Ovary (tissue), 10 donors: ENCODE measurements at regions of chr17 and their contacts with region 1.

Region 1: GRCh38 chr17:40349920-40350909 is 14.3 kb downstream of the GJD3 start:
- DNase-seq: peak in 3 of 5 donors; percentile 30 to 49 (median 40)
- H3K4me3 ChIP-seq: no peak overlapping the region
- H3K27ac ChIP-seq: peak overlapping the region in 1 of 2 donors; percentile 84
- H3K4me1 ChIP-seq: peaks cover 38% of the 10 kb centered on the region
- H3K27me3 ChIP-seq: no peaks in the 10 kb centered on the region
- CTCF ChIP-seq: no peak
- EP300 ChIP-seq: no peak
- POLR2A ChIP-seq: no peak

Region 2: GRCh38 chr17:40203131-40203530 is 147.1 kb before region 1 on chr17:
- intact Hi-C with region 1: loop called (anchors 5 to 10 kb)
- DNase-seq: no peak
- H3K4me3 ChIP-seq: no peak overlapping the region
- H3K27ac ChIP-seq: no peak overlapping the region
- H3K4me1 ChIP-seq: no peaks in the 10 kb centered on the region
- H3K27me3 ChIP-seq: no peaks in the 10 kb centered on the region
- CTCF ChIP-seq: no peak
- EP300 ChIP-seq: no peak
- POLR2A ChIP-seq: no peak

Region 3: GRCh38 chr17:40287494-40288369 is 62.5 kb before region 1 on chr17 and contains the start of gene CDC6:
- intact Hi-C with region 1: no loop called
- DNase-seq: peak; percentile 97 to 99 (median 98)
- H3K4me3 ChIP-seq: peak within 1 kb of the TSS; percentile 41
- H3K27ac ChIP-seq: no peak within 1 kb of the TSS
- H3K4me1 ChIP-seq: peaks cover 2% of the 10 kb centered on the region
- H3K27me3 ChIP-seq: no peaks in the 10 kb centered on the region
- CTCF ChIP-seq: no peak
- EP300 ChIP-seq: no peak
- POLR2A ChIP-seq: no peak
- total RNA-seq, gene CDC6: 0.34 to 3.8 (median 0.76) TPM

Region 4: GRCh38 chr17:40303009-40303657 is 47.1 kb before region 1 on chr17:
- intact Hi-C with region 1: loop called (anchors 2 kb)
- DNase-seq: peak in 2 of 5 donors; percentile 32 to 68
- H3K4me3 ChIP-seq: no peak overlapping the region
- H3K27ac ChIP-seq: no peak overlapping the region
- H3K4me1 ChIP-seq: peaks cover 21% of the 10 kb centered on the region
- H3K27me3 ChIP-seq: no peaks in the 10 kb centered on the region
- CTCF ChIP-seq: peak; percentile 61 to 82 (median 78)
- EP300 ChIP-seq: no peak
- POLR2A ChIP-seq: no peak

Region 5: GRCh38 chr17:40309031-40309948 is 40.9 kb before region 1 on chr17 and contains the start of gene RARA:
- intact Hi-C with region 1: loop called in 2 of 4 experiments (anchors 2 kb)
- DNase-seq: peak; percentile 44 to 68 (median 61)
- H3K4me3 ChIP-seq: peak within 1 kb of the TSS; percentile 52
- H3K27ac ChIP-seq: peak within 1 kb of the TSS in 1 of 2 donors; percentile 58
- H3K4me1 ChIP-seq: peaks cover 33% of the 10 kb centered on the region
- H3K27me3 ChIP-seq: no peaks in the 10 kb centered on the region
- CTCF ChIP-seq: no peak
- EP300 ChIP-seq: no peak
- POLR2A ChIP-seq: no peak
- total RNA-seq, gene RARA: 19.8 to 100 (median 62.2) TPM

Region 6: GRCh38 chr17:40317880-40318829 is 32.1 kb before region 1 on chr17:
- intact Hi-C with region 1: loop called in 1 of 4 experiments (anchors 5 kb)
- DNase-seq: peak; percentile 93 to 97 (median 95)
- H3K4me3 ChIP-seq: peak overlapping the region; percentile 95
- H3K27ac ChIP-seq: peak overlapping the region; percentile 73 to 80
- H3K4me1 ChIP-seq: peaks cover 42% of the 10 kb centered on the region
- H3K27me3 ChIP-seq: no peaks in the 10 kb centered on the region
- CTCF ChIP-seq: peak in 1 of 3 donors; percentile 16
- EP300 ChIP-seq: no peak
- POLR2A ChIP-seq: peak; percentile 83